ENCODE measurements at regions of chr6 and their contacts with region 1.

Region 1: DNA sequence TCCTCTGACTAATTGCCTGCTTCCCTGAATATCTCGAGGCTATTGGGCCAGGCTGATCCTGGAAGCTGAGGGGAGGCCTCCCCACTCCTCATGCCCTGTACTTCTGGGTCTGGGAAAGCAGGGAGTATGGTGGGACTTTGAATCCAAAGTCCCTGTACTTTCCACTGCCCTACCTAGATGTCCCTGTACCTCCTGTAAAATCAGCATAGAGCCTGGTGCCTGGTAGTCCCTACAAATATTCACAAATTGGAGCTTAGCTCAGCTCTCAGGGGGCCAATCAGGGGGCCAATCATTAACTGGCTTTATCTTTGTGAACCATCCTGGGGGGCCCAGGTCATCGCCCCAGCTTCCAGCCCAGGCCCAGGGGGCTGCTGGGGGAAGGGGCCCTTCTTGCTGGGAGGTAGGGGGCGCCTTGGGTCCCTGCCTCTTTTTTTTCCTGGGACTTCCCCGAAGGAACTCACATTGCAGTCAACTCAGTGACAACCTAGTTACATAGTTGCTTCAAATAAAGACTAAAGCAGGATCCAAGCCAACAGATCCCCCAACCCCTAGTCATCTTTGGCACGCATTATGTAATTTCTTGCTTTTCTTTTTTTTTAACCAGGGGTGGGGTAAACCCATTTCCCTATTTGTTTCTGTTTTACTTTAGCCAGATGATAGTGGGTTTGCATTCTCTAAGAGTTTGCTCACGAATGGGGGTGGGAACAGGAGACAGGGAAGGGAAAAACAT is 6.9 kb upstream of the VEGFA start:
- DNase-seq: peak in 1 of 2 donors; percentile 45
- H3K4me3 ChIP-seq: no peak overlapping the region
- CTCF ChIP-seq: no peak
- POLR2A ChIP-seq: no peak

Region 2: DNA sequence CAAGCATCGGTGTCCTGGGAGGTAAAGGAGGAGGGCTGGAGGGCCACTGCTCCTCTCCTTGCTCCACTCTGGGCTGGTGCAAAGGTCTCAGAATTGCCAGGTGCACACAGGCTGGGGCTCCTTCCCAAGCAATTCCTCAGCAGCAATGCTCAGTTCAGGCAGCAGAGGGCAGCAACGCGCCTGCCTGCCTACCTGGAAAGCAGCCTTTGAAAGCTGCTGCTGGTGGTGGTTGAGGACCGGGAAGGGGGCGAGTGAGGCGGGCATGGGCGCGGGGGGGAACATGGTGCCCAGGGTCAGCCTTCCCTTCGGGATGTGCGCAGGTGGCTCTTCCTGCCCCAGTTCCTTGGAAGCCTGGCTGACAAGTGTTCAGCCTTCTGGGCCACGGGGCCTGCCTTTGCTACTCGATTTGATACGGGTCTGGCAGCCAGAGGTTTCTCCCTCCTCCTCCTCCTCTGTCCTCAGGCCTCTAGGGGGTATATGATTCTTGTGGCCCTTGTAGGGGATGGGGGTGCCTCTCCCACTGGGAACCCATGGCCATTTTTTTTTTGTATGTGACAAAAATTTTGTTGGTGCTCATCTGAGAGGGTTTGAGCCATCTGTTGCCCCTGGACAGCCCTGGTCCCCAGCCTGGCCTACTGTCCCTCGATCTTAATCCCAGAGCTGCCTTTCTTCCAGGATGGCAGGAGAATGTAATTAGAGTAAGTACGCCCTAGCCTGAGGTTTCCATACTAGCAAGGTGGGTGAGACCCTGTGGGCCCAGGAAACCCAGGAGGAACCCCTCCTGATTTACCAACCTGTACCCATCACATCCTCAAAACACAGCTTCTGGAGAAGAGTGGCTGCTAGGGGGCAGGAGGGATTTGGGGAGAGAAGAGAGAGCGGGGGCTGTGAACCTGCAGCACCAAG is 95.6 kb before region 1 on chr6:
- intact Hi-C with region 1: loop called (anchors 5 kb)
- DNase-seq: peak; percentile 65 to 97
- H3K4me3 ChIP-seq: no peak overlapping the region
- CTCF ChIP-seq: peak in 1 of 3 donors; percentile 91
- POLR2A ChIP-seq: no peak

Region 3: DNA sequence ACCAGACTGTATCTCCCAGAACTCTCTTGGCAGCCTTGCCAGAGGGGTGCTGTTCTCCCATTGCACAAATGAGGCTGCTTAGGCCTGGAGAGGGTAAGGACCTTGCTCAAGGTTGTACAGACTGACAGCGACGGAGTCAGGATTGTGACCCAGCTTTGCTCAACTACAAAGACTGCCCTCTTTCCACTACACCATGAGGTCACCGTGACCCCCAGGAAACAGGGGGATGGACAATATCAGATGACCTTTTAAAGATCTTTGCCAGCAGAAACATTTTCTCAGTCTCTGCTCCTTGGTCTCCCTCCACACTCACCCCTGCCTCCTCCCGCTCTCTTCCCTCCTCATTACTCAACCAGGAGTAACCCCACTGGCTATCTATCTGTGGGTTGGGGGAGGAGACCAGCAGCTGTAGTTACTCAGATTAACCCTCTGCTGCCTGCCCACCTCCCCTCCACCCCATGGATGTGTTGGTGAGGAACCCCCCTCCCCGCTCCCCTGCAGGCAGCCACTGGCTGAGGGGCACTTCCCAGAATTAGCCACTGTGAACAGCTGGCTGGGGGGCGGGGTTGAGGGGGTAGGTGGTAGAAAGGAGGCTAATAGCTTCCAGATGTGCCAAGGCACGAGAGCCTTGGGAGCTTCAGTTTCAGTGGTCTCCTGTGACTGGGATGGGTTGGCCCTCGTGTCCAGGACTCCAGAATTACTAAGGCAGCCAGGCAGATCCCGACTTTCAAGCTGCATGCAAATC is 48.6 kb before region 1 on chr6:
- intact Hi-C with region 1: loop called (anchors 5 kb)
- DNase-seq: no peak
- H3K4me3 ChIP-seq: no peak overlapping the region
- CTCF ChIP-seq: no peak
- POLR2A ChIP-seq: no peak